Gastrocnemius medialis (tissue), 4 donors: ENCODE measurements at regions of chr3 and their contacts with region 1.

Region 1: DNA sequence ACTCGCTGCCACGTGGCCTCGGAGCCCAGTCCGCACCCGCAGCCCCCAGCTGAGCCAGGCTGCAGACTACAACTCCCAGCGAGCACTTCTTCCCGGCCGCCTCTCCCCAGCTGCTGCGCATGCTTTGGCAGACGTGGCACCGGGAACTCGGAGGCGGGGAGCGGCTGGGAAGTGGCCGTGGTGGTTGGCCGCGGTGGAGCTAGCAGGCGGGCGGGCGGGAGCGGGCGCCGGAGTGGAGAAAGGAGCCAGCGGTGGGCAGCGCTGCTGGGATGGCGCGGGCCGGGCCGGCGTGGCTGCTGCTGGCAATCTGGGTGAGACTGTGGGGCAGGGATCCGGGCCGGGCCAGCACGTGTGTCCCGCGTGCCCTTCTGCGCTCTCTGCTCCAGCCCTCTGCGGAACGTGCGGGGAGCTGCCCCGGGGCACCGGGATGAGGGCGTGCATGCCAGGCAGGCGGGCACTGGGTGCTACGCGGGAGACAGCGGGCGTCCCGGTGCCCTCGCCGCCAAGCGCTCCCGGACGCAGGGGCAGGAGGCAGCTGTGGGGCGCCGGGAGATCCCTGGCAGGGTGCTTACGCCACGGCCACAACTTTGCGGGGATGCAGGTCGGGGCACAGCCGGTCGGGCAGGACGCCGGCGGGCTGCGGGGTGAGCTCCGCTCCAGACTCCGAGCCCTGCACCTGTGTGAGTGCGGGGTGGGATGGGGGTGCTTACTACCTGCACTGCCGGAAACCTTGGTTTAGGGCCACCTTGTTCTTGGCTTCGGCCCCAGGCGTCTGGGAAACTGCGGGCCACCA is at the start of gene PDIA5:
- DNase-seq: peak; percentile 81 to 85
- ATAC-seq: peak; percentile 94 to 97
- H3K4me3 ChIP-seq: peak within 1 kb of the TSS; percentile 70 to 88 (median 80)
- H3K27ac ChIP-seq: peak within 1 kb of the TSS; percentile 62 to 75 (median 70)
- H3K4me1 ChIP-seq: peaks cover 6 to 10% of the 10 kb centered on the region in 2 donors
- H3K27me3 ChIP-seq: no peaks in the 10 kb centered on the region
- CTCF ChIP-seq: no peak
- POLR2A ChIP-seq: peak; percentile 58 to 69
- total RNA-seq, gene PDIA5: 2.3 to 4.2 (median 3.0) TPM

Region 2: GRCh38 chr3:123036352-123037014 is 30.6 kb before region 1 on chr3:
- in situ Hi-C with region 1: no loop called
- intact Hi-C with region 1: loop called (anchors 2 kb)
- DNase-seq: peak; percentile 18 to 26
- ATAC-seq: peak; percentile 97 to 99
- H3K4me3 ChIP-seq: no peak overlapping the region
- H3K27ac ChIP-seq: no peak overlapping the region
- H3K4me1 ChIP-seq: peaks cover 6% of the 10 kb centered on the region in 2 donors
- H3K27me3 ChIP-seq: peaks cover 0 to 4% (median under 1%) of the 10 kb centered on the region in 3 donors
- CTCF ChIP-seq: no peak
- POLR2A ChIP-seq: no peak

Region 3: DNA sequence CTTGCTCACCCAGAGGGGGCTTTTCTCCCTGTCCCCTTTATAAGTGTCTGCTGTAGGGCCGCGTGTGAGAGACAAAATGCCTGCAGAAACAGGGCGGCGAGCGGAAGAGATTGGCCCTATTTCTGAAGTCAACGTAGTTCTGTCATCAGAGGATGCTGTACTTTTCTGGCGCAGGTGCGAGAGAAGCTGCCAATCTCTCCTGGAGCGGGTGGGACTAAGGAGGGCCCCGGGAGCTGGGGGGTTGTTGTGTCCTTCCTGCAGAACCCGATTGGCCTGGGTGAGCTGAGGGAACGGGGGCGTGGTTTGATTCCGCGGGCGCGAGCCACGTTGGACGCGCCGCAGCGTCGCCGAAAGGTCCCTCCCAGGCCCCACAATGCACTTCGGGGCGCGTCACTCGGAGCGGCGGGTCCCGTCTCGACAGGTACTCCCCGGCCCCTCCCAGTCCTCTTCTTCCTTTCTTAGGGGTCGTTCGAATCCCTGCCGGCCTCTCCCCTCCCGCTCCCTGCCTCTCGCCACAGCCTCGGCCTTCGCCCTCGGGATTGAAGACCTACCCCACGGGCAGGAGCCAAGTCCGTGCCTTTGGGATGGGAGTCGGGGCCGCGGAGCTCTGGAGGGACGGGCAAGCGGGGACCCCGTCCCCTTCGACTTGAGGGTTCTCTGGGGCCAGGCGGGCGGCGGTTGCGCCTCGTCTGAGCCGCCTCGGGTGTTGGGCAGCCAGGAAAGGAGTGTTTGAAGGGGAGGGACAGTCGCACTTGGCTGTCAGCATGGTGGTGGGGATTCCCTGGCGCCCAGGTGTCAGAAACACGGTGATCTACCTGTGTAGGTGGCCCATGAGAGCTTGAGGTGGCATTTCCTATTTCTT is 134.7 kb after region 1 on chr3 and contains the start of gene SEC22A:
- in situ Hi-C with region 1: no loop called
- intact Hi-C with region 1: loop called (anchors 5 kb)
- DNase-seq: peak; percentile 80 to 87
- ATAC-seq: peak; percentile 96 to 97
- H3K4me3 ChIP-seq: peak within 1 kb of the TSS; percentile 84 to 99 (median 96)
- H3K27ac ChIP-seq: peak within 1 kb of the TSS; percentile 88 to 93 (median 92)
- H3K4me1 ChIP-seq: peaks cover 15% of the 10 kb centered on the region in 2 donors
- H3K27me3 ChIP-seq: no peaks in the 10 kb centered on the region
- CTCF ChIP-seq: no peak
- POLR2A ChIP-seq: peak; percentile 74 to 82
- total RNA-seq, gene SEC22A: 13.8 to 22.6 (median 16.8) TPM

Region 4: GRCh38 chr3:123700791-123701722 is 634.0 kb after region 1 on chr3:
- in situ Hi-C with region 1: no loop called
- intact Hi-C with region 1: no loop called
- DNase-seq: no peak
- ATAC-seq: peak; percentile 51 to 54
- H3K4me3 ChIP-seq: peak overlapping the region; percentile 22 to 43 (median 32)
- H3K27ac ChIP-seq: peak overlapping the region; percentile 59 to 78 (median 63)
- H3K4me1 ChIP-seq: no peaks in the 10 kb centered on the region
- H3K27me3 ChIP-seq: no peaks in the 10 kb centered on the region
- CTCF ChIP-seq: no peak
- POLR2A ChIP-seq: no peak